ENCODE measurements at regions of chr17 and their contacts with region 1.

Region 1: GRCh38 chr17:79045842-79046196 is 21.9 kb downstream of the C1QTNF1 start:
- DNase-seq: peak in 1 of 2 experiments; percentile 75
- H3K4me3 ChIP-seq: no peak overlapping the region
- H3K27ac ChIP-seq: no peak overlapping the region
- H3K4me1 ChIP-seq: no peaks in the 10 kb centered on the region
- H3K27me3 ChIP-seq: no peaks in the 10 kb centered on the region
- CTCF ChIP-seq: peak; percentile 85

Region 2: DNA sequence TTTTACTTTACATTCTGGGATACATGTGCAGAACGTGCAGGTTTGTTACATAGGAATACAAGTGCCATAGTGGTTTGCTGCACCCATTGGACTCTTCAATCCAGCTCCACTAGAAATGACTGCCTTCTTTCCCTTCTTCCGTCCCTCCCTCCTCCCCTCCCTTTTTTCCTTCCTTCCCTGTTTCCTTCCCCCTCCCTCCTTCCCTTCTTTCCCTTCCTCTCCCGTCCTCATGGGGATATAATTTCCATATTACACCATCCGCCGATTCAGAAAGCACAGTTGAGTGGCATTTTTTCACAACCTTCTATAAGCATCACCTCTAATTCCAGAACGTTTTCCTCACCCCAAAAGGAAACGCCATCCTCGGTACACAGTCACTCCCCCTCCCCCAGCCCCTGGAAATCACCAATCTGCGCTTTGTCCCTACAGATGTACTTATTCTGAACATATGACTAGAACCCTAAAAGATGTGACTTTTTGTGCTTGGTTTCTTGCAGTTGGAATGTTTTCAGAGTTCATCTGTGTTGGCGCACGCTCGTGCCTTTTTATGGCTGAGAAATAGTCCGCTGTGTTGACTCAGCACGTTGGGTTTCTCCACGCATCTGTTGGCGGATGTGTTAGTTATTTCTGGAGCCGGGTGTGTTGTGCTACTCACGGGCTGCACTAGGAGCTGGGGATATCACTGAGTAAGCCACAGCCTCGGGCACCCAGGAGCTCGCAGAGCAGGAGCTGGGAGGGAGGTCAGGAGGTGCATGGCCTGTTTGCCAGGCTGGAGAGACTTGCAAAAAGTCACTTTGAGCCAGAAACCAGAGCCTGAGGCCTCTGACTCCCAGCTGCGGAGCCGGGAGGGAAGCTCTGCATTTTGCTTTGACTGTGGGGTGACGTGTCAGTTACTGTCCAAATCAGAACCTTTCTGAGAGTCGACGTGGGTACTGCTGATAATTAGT is 1568.6 kb before region 1 on chr17:
- CTCF ChIA-PET with region 1: no interaction called
- POLR2A ChIA-PET with region 1: no interaction called
- intact Hi-C with region 1: no loop called
- DNase-seq: peak in 1 of 2 experiments; percentile 76
- H3K4me3 ChIP-seq: no peak overlapping the region
- H3K27ac ChIP-seq: no peak overlapping the region
- H3K4me1 ChIP-seq: no peaks in the 10 kb centered on the region
- H3K27me3 ChIP-seq: no peaks in the 10 kb centered on the region
- CTCF ChIP-seq: no peak

Region 3: GRCh38 chr17:78986048-78986648 is 59.7 kb before region 1 on chr17:
- CTCF ChIA-PET with region 1: interaction called, 3 read pairs
- POLR2A ChIA-PET with region 1: no interaction called
- intact Hi-C with region 1: loop called (anchors 2 kb)
- DNase-seq: no peak
- H3K4me3 ChIP-seq: peak overlapping the region; percentile 48; the same call in 1 of the 2 replicates
- H3K27ac ChIP-seq: peak overlapping the region; percentile 88
- H3K4me1 ChIP-seq: peaks cover 30% of the 10 kb centered on the region
- H3K27me3 ChIP-seq: no peaks in the 10 kb centered on the region
- CTCF ChIP-seq: no peak

Region 4: GRCh38 chr17:78993241-78993956 is 52.4 kb before region 1 on chr17:
- CTCF ChIA-PET with region 1: interaction called, 5 read pairs
- POLR2A ChIA-PET with region 1: no interaction called
- intact Hi-C with region 1: loop called (anchors 1 kb)
- DNase-seq: peak in 1 of 2 experiments; percentile 44
- H3K4me3 ChIP-seq: no peak overlapping the region
- H3K27ac ChIP-seq: no peak overlapping the region
- H3K4me1 ChIP-seq: peaks cover 35% of the 10 kb centered on the region
- H3K27me3 ChIP-seq: no peaks in the 10 kb centered on the region
- CTCF ChIP-seq: peak; percentile 78

Region 5: DNA sequence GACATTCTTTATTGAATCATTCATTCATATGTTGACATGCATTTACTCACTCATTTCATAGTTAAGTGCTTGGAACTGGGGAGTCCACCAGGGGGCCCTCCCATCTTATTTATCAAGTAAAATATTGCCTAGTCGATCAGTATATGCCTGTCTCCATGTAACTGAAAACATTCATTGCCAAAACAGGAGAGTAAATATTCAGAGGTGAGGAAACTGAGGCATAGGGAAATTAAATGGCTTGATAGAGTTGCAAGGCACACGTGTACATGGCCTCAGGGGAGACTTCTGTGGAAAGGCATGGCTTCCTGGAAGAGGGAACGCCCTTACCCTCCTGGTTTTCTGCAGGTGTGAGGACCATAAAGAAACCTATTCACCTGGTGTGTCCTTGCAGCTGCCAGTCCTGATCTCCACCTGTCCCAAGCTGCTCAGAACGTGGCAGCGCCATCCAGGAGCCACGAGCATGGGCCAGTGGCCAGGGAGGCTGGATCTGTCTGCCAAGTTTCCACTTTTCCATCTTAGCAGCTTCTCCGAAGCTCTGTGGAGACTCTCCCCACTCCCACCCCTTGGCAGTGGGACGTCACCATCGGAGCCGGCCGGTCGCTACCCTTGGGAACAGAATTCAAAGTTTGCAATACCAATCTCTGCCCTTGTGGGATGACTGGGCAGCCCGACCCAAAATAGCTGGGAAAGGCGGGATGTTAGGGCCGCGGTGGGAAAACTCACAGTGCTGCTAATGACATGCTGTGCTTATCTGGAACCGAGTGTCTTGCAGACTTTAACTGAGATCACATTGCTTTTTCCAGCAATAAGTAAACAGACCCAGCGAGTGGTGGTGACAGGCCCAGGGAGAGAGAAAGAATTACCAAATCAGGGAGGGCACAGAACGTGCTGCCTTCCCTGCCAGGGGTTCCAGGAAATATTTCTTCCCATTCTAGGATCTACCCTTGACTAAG is 25.9 kb before region 1 on chr17:
- CTCF ChIA-PET with region 1: interaction called, 4 read pairs
- POLR2A ChIA-PET with region 1: no interaction called
- intact Hi-C with region 1: loop called (anchors 1 kb)
- DNase-seq: peak; percentile 47 to 49
- H3K4me3 ChIP-seq: no peak overlapping the region
- H3K27ac ChIP-seq: peak overlapping the region; percentile 49; the same call in 1 of the 2 replicates
- H3K4me1 ChIP-seq: peaks cover 50% of the 10 kb centered on the region
- H3K27me3 ChIP-seq: no peaks in the 10 kb centered on the region
- CTCF ChIP-seq: peak; percentile 78

Region 6: DNA sequence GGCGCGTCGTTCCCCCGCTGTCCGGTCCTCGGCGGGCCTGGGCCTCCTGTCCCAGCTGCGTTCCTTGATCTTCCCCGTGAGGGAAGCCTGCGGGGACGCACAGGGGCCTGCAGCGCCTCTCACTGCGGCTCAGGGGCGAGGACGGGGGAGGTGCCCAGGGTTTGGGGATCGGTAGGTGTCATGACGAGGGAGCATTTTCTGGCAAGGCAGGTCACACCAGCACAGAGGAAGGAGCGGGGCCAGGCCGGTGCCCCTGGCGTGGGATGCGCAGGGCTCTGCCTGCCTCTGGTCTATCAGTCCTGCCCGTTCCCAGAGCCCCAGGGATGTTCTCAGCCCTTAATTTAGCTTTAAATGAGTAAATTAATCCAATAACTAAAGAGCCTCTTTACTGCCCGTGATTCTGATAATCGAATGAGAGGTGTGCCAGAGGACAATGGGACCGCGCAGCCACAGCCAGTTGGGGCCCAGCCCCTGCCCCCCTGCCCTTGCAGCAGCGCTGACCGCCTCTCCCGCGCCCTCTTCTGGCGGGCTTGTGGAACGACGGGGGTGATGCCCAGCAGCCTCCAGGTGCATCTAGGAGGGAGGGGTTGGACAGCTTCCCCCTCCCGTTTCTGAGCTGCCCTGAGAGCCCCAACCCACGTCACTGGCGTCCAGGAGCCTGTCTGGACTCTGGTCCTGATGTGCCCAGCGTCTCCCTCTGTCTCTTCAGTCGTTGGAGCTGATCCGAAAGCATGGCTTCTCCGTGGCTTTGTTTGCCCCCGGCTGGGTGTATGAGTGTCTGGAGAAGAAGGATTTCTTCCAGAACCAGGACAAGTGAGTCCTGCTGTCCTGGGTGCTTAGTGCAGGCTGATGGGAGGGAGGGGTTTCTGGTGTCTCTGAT is 36.7 kb after region 1 on chr17:
- CTCF ChIA-PET with region 1: interaction called, 4 read pairs
- POLR2A ChIA-PET with region 1: no interaction called
- intact Hi-C with region 1: loop called (anchors 1 kb)
- DNase-seq: peak in 1 of 2 experiments; percentile 61
- H3K4me3 ChIP-seq: no peak overlapping the region
- H3K27ac ChIP-seq: no peak overlapping the region
- H3K4me1 ChIP-seq: no peaks in the 10 kb centered on the region
- H3K27me3 ChIP-seq: no peaks in the 10 kb centered on the region
- CTCF ChIP-seq: peak; percentile 80

Region 7: DNA sequence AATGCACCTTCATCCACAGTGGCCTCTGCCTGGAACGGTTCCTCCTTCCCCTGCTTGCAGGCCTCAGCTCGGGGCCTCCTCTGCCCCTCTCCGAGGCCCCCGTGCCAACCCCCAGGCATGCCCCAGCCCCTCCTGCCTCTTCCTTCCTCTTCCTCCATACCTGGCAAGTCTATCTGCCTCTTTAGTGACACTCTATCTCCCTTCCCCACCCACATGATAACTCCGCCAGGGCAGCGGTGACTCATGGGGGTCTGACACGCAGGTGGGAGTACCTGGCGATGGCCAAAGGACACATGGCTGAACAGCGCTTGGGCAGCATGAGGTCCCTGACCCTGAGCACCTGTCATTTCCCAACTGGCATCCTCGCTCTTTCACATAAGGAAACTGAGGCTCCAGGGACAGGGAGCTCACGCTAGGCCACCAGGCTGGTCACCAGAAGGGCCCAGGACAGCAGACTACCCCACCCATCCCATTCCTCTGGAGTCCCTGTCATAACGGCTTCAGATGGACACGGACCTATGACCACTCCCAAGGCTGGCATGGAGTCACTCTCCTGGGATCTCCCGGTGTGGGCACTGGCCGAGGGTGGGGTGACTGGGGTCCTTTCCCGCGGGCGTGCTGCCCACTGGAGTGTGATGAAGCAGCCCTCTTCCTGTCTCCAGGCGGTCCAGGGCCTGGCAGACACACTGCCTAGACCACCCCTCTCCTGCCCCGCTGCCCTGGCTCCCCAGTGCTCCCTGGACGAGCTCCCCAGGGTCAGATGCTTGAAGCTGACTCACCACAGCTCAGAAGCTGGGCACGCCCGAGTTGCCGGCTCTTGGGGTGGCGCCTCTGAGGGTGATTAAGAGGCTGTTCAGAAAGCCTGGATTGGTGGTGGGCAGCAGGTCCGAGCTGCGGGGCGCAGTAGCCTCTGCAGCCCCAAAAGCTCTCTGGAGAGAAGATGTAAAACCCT is 129.4 kb after region 1 on chr17:
- CTCF ChIA-PET with region 1: no interaction called
- POLR2A ChIA-PET with region 1: no interaction called
- intact Hi-C with region 1: no loop called
- DNase-seq: peak in 1 of 2 experiments; percentile 19
- H3K4me3 ChIP-seq: no peak overlapping the region
- H3K27ac ChIP-seq: no peak overlapping the region
- H3K4me1 ChIP-seq: no peaks in the 10 kb centered on the region
- H3K27me3 ChIP-seq: peaks cover 90% of the 10 kb centered on the region
- CTCF ChIP-seq: no peak

Region 8: DNA sequence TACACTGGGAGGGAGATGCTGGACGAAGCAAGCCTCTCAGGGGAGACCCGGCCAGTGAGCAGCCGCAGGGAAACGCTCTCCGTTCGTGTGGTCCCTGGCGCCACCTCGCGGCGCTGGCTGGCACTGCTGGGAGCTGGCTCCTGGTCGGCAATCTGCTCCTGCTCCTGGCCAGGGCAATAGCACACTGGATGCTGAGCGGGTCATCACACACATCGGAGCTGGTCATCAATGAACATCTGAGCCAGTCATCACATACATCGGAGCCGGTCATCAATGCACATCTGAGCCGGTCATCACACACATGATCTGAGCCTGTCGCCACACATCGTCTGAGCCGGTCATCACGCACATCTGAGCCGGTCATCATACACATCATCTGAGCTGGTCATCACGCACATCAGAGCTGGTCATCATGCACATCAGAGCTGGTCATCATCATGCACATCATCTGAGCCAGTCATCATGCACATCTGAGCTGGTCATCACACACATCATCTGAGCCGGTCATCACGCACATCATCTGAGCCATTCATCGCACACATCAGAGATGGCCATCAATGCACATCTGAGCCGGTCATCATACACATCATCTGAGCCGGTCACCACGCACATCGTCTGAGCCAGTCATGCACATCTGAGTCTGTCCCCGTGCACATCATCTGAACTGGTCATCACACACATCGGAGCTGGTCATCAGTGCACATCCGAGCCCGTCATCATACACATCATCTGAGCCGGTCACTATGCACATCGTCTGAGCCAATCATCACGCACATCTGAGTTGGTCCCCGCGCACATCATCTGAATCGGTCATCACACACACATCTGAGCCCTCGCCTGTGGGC is 347.8 kb after region 1 on chr17:
- CTCF ChIA-PET with region 1: no interaction called
- POLR2A ChIA-PET with region 1: no interaction called
- intact Hi-C with region 1: loop called (anchors 1 kb)
- DNase-seq: peak in 1 of 2 experiments; percentile 74
- H3K4me3 ChIP-seq: no peak overlapping the region
- H3K27ac ChIP-seq: no peak overlapping the region
- H3K4me1 ChIP-seq: no peaks in the 10 kb centered on the region
- H3K27me3 ChIP-seq: peaks cover 60% of the 10 kb centered on the region
- CTCF ChIP-seq: peak; percentile 79